HCT116 (cell line): ENCODE measurements at regions of chr2 and their contacts with region 1.

Region 1: DNA sequence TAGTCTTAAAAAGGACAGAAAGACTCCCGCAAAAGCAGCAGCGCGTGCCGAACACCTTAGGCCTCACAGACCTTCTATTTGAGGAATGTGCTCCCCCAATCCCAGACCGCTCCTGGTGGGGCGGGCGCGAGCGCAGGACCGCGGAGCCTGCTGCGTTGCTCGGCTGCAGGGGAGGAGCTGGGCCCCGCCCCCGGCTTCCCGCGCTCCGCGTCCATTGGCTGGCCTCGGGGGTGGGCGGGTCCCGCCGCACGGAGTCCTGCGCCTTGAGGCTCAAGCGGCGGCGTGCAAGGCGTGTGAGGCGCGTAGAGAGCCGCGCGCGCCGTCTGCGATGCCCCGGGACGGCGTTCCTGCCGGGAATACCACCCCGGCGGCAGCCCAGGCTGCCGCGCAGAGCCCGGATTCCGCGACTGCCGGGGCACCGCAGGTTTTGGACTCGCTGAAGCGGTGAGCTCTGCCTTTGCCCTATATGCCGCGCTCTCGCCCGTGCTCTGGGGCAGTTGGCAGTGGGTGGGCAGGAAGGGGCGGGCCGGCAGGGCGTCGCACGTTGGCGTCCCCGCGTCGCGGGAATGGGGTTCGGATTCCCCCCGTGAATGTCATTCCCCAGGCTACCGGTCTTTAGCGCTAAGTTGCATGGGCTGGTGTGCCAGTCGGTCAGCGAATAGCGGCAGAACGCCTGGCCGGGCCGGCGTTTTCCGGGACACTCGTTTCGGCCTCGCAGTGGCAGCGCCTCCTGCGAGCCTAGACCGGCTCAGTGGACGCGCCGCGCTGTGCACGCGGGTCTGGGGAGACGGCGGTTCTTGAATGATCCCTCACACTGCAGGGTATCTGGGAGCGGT is 49.6 kb upstream of the PAIP2B start:
- DNase-seq: peak; percentile 84
- ATAC-seq: peak; percentile 93
- H3K4me3 ChIP-seq: peak overlapping the region; percentile 57 to 64
- H3K27ac ChIP-seq: peak overlapping the region; percentile 70
- H3K4me1 ChIP-seq: peaks cover 10 to 25% of the 10 kb centered on the region in 2 experiments
- H3K27me3 ChIP-seq: no peaks in the 10 kb centered on the region
- CTCF ChIP-seq: no peak
- POLR2A ChIP-seq: peak; percentile 90
- RAD21 ChIP-seq: no peak

Region 2: DNA sequence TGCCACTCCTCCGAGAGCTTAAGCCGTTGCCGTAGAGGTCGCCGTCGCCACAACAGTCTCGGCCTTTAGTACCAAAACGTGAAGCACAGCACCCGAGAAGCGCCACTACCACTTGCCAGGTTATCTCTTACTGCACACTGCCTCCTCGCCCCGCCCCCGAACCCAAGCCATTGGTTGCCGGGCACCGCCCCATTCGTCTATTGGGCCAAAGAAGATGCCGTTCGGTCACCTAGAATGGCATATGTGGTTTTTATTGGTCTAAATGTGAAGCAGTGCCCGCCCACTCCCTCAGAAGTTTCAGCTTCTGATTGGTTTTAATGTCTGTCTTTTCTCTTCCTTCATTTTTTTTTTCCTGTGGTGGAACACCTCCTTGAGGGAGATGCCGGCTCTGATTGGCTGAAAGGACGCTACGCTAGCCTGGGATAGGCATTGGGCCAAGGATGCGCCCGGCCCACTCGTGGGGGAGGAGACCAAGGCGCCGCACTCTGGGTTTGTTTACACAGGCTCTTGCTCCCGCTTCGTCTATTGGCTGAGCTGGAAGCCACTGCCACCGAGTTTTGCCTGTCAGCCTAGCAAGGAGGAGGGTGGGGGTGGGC is 49.5 kb before region 1 on chr2 and contains the start of gene PAIP2B:
- CTCF ChIA-PET with region 1: no interaction called
- POLR2A ChIA-PET with region 1: interaction called, 3 read pairs
- RAD21 ChIA-PET with region 1: no interaction called
- intact Hi-C with region 1: loop called (anchors 1 kb)
- DNase-seq: peak; percentile 99
- ATAC-seq: peak; percentile 92
- H3K4me3 ChIP-seq: peak within 1 kb of the TSS; percentile 67 to 71
- H3K27ac ChIP-seq: peak within 1 kb of the TSS; percentile 39; the same call in 1 of the 2 replicates
- H3K4me1 ChIP-seq: peaks cover 3 to 20% of the 10 kb centered on the region in 2 experiments; a peak in 3 of 4 replicates
- H3K27me3 ChIP-seq: no peaks in the 10 kb centered on the region
- CTCF ChIP-seq: no peak
- POLR2A ChIP-seq: peak; percentile 42
- RAD21 ChIP-seq: no peak
- total RNA-seq, gene PAIP2B: 5.9 TPM